PC-9 (cell line): ENCODE measurements at regions of chr1 and their contacts with region 1.

Region 1: GRCh38 chr1:109783429-109783831 is 19.7 kb upstream of the EPS8L3 start:
- DNase-seq: peak; percentile 77 to 99
- H3K4me3 ChIP-seq: peak overlapping the region; percentile 12; the same call in 1 of the 2 replicates
- H3K27ac ChIP-seq: peak overlapping the region; percentile 89
- H3K4me1 ChIP-seq: peaks cover 76% of the 10 kb centered on the region
- H3K27me3 ChIP-seq: no peaks in the 10 kb centered on the region
- CTCF ChIP-seq: no peak

Region 2: DNA sequence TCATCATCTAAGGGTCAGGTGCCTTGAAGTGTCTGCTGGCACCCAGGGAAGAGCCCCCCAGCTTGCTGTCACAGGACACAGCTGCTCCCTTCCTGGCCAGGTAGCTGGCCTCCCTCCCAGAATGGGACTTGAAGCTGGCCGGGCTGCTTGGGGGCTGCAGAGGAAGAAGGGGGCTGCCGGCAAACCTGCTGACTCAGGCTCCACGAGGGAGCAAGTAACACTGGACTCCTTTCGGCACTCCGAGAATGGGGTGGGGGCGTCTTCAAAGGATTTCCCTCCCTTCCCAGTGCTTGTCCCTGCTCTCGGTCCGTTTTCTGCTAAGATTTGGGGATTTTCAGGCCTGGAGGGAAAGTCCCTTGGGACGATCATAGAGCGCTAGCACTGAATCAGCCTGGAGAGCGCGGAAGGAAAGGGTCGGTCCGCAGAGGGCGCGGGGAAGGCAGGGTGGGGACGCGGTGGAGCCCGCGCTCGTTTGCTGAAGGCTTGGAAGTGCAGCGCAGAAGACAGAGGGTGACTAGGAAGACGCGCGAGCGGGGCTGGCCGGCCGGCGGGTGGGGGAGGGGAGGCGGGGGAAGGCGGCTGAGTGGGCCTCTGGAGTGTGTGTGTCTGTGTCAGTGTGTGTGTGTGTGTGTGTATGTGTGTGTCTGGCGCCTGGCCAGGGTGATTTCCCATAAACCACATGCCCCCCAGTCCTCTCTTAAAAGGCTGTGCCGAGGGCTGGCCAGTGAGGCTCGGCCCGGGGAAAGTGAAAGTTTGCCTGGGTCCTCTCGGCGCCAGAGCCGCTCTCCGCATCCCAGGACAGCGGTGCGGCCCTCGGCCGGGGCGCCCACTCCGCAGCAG is 126.9 kb after region 1 on chr1 and contains the start of gene CSF1:
- CTCF ChIA-PET with region 1: no interaction called
- POLR2A ChIA-PET with region 1: interaction called, 25 read pairs
- intact Hi-C with region 1: no loop called
- DNase-seq: peak; percentile 53 to 58
- H3K4me3 ChIP-seq: peak within 1 kb of the TSS; percentile 98
- H3K27ac ChIP-seq: 0 out of 2 replicates have a peak within 1 kb of the TSS, but pooled peaks have one; percentile 9
- H3K4me1 ChIP-seq: peaks cover 44% of the 10 kb centered on the region
- H3K27me3 ChIP-seq: no peaks in the 10 kb centered on the region
- CTCF ChIP-seq: no peak
- total RNA-seq, gene CSF1: 29.8 and 35.2 TPM in 2 replicates